ENCODE measurements at regions of chr5 and their contacts with region 1.

Region 1: DNA sequence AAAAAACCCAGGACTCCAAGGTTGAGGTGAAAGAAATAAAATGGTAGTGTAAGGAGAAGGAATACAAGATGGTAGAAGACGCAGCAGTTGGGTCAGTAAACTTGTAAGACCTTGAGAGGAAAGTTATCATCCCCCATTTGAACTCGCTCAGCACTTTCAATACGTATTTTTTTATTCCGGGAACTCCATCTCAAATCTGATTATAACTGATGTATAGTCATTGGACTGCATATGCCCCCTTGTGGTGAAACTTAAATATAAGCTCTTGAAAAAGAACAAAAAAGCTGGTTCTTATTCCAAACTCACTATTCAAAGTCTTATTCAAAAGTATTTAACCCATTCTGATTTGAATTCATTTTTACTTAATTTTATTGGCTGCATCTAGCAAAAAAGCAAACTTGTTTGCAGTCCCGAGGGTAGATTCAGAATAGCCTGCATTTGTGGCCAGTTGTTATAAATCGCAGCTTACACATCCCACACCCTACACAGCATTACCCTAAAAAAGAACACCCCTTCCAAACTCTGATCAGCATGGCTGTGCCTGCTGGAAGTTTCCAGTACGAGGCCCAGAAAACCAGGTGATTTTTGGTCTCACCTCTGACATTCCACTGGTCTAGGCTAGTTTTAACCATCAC is 118.0 kb downstream of the ESM1 start:
- DNase-seq: peak; percentile 70
- H3K4me3 ChIP-seq: no peak overlapping the region
- H3K27ac ChIP-seq: no peak overlapping the region
- H3K4me1 ChIP-seq: no peaks in the 10 kb centered on the region
- H3K27me3 ChIP-seq: peaks cover 0 to 4% of the 10 kb centered on the region in 2 experiments
- CTCF ChIP-seq: peak; percentile 37 to 40
- POLR2A ChIP-seq: no peak

Region 2: DNA sequence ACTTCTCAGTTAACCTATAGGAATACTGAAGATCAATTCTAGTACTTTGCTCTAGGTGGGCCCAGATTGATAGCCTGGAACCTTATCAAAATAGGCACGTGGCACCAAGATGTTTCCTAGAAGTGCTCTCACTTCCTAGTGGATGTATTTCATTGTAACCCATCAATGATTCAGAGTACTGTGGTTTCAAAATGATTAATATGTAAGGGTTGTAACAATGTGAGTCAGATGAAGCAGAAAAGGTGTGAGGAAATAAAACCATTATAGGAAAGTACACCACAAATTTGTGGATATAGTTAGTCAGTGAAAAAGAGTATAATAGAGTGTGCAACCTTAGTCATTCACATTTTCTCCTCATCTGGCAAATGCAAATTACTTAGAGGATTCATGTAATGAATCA is 1564.3 kb before region 1 on chr5:
- CTCF ChIA-PET with region 1: no interaction called
- POLR2A ChIA-PET with region 1: no interaction called
- dilution Hi-C with region 1: no loop called
- intact Hi-C with region 1: no loop called
- DNase-seq: peak; percentile 54
- H3K4me3 ChIP-seq: no peak overlapping the region
- H3K27ac ChIP-seq: no peak overlapping the region
- H3K4me1 ChIP-seq: no peaks in the 10 kb centered on the region
- H3K27me3 ChIP-seq: no peaks in the 10 kb centered on the region
- CTCF ChIP-seq: no peak
- POLR2A ChIP-seq: no peak

Region 3: DNA sequence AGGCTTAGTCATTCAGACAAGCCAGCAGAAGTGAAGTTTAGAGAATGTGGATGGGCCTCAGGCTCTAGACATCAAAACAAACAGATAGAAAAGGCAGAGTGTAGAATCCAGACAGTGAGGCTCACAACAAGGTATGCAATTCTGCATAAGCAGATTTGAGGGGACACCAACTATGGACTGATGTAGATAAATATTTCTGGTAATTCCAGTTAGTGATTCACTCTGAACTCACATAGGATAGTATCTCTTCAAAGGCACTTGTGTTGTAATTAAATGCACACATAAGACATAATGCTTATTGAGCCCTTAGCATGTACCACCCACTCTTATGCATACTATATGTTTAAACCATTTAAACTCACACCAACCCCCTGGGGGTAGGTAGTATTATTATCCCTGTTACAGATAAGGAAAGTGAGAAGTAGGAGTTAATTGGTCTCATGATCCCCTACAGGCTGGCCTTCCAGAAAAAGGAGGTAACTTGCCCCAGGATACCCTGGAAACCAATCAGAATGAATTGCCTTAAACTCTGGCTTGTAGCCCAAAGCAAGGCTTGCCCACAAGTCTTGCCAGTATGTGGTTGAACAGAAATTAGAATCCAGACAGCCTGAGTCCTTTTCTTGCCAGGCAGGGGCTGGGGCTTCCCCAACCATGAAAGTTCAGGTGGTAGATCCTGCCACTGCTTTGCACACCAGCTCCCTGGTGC is 451.4 kb before region 1 on chr5:
- CTCF ChIA-PET with region 1: interaction called, 15 read pairs
- POLR2A ChIA-PET with region 1: no interaction called
- dilution Hi-C with region 1: no loop called
- intact Hi-C with region 1: no loop called
- DNase-seq: no peak
- H3K4me3 ChIP-seq: no peak overlapping the region
- H3K27ac ChIP-seq: no peak overlapping the region
- H3K4me1 ChIP-seq: no peaks in the 10 kb centered on the region
- H3K27me3 ChIP-seq: peaks cover 8 to 12% of the 10 kb centered on the region in 2 experiments
- CTCF ChIP-seq: no peak
- POLR2A ChIP-seq: no peak

Region 4: GRCh38 chr5:54492178-54492577 is 375.2 kb before region 1 on chr5:
- CTCF ChIA-PET with region 1: interaction called, 49 read pairs
- POLR2A ChIA-PET with region 1: no interaction called
- dilution Hi-C with region 1: no loop called
- intact Hi-C with region 1: no loop called
- DNase-seq: no peak
- H3K4me3 ChIP-seq: no peak overlapping the region
- H3K27ac ChIP-seq: no peak overlapping the region
- H3K4me1 ChIP-seq: no peaks in the 10 kb centered on the region
- H3K27me3 ChIP-seq: peaks cover 3 to 19% of the 10 kb centered on the region in 2 experiments
- CTCF ChIP-seq: no peak
- POLR2A ChIP-seq: no peak

Region 5: DNA sequence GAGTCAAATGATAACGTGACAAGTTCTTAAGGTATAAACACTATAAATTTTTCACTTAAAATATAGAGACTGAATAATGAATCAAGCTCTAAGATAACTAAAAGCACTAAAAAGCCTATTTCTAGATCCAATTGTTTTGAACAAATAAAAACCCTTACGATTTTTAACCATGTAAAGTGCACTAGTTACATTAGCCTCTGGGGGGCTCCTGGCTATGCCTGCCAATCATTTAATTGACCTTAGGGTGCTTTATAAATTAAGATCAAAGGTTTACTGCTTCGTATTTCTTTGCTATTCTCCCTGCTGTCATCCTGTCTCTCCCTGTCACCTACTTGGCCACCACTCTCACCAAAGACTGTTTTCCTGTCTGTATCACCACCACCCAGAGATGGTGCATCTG is 15.4 kb before region 1 on chr5:
- CTCF ChIA-PET with region 1: interaction called, 25 read pairs
- POLR2A ChIA-PET with region 1: no interaction called
- dilution Hi-C with region 1: no loop called
- intact Hi-C with region 1: no loop called
- DNase-seq: no peak
- H3K4me3 ChIP-seq: no peak overlapping the region
- H3K27ac ChIP-seq: no peak overlapping the region
- H3K4me1 ChIP-seq: no peaks in the 10 kb centered on the region
- H3K27me3 ChIP-seq: peaks cover 0 to 4% of the 10 kb centered on the region in 2 experiments
- CTCF ChIP-seq: no peak
- POLR2A ChIP-seq: no peak

Region 6: GRCh38 chr5:54895816-54896341 is 28.5 kb after region 1 on chr5:
- CTCF ChIA-PET with region 1: interaction called, 22 read pairs
- POLR2A ChIA-PET with region 1: no interaction called
- dilution Hi-C with region 1: no loop called
- intact Hi-C with region 1: no loop called
- DNase-seq: peak; percentile 40
- H3K4me3 ChIP-seq: no peak overlapping the region
- H3K27ac ChIP-seq: no peak overlapping the region
- H3K4me1 ChIP-seq: peaks cover 1% of the 10 kb centered on the region
- H3K27me3 ChIP-seq: peaks cover 0 to 2% of the 10 kb centered on the region in 2 experiments
- CTCF ChIP-seq: peak; percentile 7 to 10
- POLR2A ChIP-seq: no peak

Region 7: DNA sequence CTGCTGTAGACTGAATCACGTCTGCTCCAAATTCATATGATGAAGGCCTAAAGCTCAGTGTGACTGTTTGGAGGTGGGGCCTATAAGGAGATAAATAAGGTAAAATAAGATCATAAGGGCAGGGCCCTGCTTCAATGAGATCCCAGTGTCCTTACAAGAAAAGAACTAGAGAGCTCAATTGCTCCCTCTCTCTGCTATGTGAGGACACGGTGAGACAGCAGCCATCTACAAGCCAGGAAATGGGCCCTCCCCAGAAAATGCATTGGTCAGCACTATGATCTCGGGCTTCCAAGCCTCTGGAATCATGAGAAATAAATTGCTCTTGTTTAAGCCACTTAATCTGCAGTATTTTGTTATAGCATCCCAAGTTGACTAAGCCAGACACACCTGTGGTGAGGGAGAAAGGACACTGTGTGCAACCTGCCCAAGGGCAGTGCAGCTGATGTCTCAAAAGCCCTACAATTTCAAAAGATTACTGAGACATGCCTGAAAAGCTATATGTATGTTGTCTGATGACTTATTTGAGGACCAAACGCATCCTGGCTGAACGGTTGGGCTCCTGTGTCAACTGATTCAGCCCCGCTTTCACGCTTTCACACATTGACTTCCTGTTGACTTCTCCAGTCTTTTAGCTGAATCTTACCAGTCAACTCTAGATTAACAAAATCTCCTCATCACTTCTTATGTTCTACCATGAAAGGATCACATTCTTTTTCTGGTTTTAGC is 169.8 kb after region 1 on chr5:
- CTCF ChIA-PET with region 1: no interaction called
- POLR2A ChIA-PET with region 1: no interaction called
- dilution Hi-C with region 1: no loop called
- intact Hi-C with region 1: no loop called
- DNase-seq: peak; percentile 7
- H3K4me3 ChIP-seq: no peak overlapping the region
- H3K27ac ChIP-seq: no peak overlapping the region
- H3K4me1 ChIP-seq: no peaks in the 10 kb centered on the region
- H3K27me3 ChIP-seq: no peaks in the 10 kb centered on the region
- CTCF ChIP-seq: no peak
- POLR2A ChIP-seq: no peak